ENCODE measurements at regions of chr12 and their contacts with region 1.

Region 1: DNA sequence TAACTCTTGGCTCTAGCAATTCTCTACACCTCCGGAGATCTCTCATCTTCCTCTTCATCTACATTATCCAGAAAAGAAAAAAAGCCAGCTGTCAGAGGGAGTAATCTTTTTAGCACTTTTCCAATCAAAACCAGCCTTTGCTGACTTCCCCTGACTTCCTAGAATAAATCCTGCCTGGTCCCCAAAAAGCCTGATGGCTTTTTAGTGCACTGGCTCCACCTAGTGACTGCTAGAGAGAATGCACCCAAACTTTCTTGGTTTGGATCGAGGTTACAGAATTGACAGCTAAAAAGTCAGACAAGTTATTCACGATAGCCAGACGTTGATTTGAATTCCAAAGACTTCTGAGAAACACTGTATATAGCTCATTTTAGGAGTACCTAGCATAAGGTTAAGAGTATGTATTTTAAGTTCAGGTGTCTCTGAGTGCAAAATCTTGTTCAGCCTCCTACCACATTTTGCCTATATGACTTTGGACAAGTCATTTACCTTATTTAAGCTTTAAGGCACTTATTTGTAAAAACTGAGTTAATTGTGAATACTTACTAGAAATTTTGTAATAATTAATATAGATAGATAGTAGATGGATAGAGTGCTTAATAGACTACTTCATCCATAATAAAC is 185.7 kb upstream of the GRIN2B start:
- DNase-seq: no peak
- ATAC-seq: peak in 1 of 4 donors; percentile 46
- H3K4me3 ChIP-seq: no peak overlapping the region
- H3K27ac ChIP-seq: no peak overlapping the region
- H3K4me1 ChIP-seq: no peaks in the 10 kb centered on the region
- H3K27me3 ChIP-seq: peaks cover 0 to 4% (median 0%) of the 10 kb centered on the region in 3 donors
- CTCF ChIP-seq: peak; percentile 82

Region 2: DNA sequence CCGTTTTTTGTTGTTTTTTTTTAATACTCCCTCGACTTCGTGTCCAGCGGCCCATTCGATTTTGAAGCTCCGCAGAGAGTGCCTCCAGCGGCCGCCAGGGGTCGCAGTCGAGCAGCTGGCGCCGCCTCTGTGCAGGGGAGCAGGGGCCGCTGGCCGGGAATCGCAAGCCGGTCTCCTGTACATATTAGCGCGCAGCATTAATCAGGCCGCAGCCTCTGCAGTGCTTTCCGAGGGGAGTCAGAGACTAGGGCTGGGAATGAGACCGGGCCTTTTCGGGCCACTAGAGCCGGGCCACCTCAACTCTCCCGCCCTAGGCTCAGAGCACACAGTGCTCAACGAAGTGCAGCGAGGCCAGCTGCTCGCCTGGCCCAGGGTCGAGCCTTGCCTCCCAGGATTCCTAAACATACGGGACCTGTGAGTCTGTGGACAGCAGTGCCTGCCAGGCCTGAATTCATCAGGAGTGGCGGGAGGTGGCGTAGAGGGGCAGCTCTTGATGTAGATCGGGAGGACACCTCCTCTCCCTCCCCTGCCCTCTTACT is 888.8 kb before region 1 on chr12:
- intact Hi-C with region 1: loop called in 1 of 2 experiments (anchors 5 kb)
- DNase-seq: peak; percentile 69 to 81
- ATAC-seq: peak; percentile 82 to 98 (median 92)
- H3K4me3 ChIP-seq: peak overlapping the region; percentile 44
- H3K27ac ChIP-seq: no peak overlapping the region
- H3K4me1 ChIP-seq: no peaks in the 10 kb centered on the region
- H3K27me3 ChIP-seq: peaks cover 0 to 36% (median 2%) of the 10 kb centered on the region in 3 donors
- CTCF ChIP-seq: peak; percentile 97

Region 3: GRCh38 chr12:13367973-13368372 is 799.1 kb before region 1 on chr12:
- intact Hi-C with region 1: loop called in 1 of 2 experiments (anchors 5 kb)
- DNase-seq: no peak
- ATAC-seq: peak; percentile 53 to 67 (median 60)
- H3K4me3 ChIP-seq: no peak overlapping the region
- H3K27ac ChIP-seq: no peak overlapping the region
- H3K4me1 ChIP-seq: no peaks in the 10 kb centered on the region
- H3K27me3 ChIP-seq: peaks cover 0 to 3% (median 0%) of the 10 kb centered on the region in 3 donors
- CTCF ChIP-seq: no peak

Region 4: DNA sequence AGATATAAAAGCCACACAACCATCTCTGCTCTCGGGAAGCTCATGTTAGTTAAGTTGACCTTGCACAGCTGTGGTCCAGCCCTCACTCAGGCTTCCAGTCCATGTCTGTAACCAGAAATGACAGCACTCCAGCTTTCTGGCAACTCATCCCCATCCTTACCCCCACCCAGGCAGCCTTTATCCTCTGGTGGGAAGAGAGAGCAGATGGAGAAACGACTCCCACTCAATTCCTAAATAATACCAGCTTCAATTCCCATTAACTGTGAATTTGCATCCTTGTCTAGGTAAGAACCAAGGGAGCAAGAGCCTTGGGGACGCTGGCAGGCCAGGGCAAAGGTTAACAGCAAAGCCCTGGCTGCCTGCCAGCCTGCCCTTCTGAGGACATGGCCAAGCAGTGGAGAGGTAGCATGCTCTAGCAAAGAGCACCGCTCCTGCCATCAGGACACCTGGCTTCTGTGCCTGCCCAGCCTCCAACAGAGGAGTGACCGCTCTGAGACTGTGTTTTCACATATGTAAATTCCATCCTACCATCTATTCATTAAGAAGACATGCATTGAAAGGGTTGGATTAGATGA is 421.9 kb before region 1 on chr12:
- intact Hi-C with region 1: loop called in 1 of 2 experiments (anchors 10 kb)
- DNase-seq: no peak
- ATAC-seq: no peak
- H3K4me3 ChIP-seq: no peak overlapping the region
- H3K27ac ChIP-seq: no peak overlapping the region
- H3K4me1 ChIP-seq: no peaks in the 10 kb centered on the region
- H3K27me3 ChIP-seq: no peaks in the 10 kb centered on the region
- CTCF ChIP-seq: no peak

Region 5: GRCh38 chr12:13864081-13864673 is 302.9 kb before region 1 on chr12:
- intact Hi-C with region 1: loop called in 1 of 2 experiments (anchors 5 kb)
- DNase-seq: peak; percentile 64 to 81
- ATAC-seq: peak in 3 of 4 donors; percentile 60 to 76 (median 71)
- H3K4me3 ChIP-seq: no peak overlapping the region
- H3K27ac ChIP-seq: no peak overlapping the region
- H3K4me1 ChIP-seq: no peaks in the 10 kb centered on the region
- H3K27me3 ChIP-seq: no peaks in the 10 kb centered on the region
- CTCF ChIP-seq: peak; percentile 72

Measured in psoas muscle (tissue), 8 donors.